CD4-positive, alpha-beta memory T cell (primary cell): ENCODE measurements at regions of chr2 and their contacts with region 1.

Region 1: DNA sequence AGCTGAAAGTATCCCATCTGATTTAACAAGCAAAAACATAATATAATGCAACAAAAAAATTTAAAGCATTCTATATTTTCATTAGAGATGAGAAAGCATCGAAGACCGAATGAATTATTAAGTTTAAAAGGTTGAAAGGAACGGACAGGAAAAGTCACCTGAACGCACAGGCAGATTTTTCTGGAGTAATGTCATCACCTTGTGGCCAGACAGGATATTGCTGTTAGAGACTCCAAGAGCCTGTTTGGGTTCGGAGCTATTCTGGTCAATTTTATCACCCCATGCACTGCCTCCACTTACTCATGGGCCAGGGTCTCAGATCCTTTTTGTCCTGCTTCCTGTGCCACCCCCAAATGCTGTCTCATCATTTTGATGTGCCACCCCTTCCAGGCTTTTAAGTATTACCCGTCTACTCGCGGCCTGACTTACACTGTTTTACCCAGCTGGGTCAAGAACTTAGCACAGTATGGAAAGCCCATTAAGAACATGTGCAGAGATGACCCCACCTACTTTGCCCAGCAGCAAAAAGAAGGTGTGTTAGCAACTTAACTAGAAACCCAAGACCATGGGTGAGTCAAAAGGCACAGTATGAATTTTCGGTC is 27.3 kb downstream of the GKN2 start:
- DNase-seq: peak; percentile 57 to 73 (median 66)
- H3K4me3 ChIP-seq: no peak overlapping the region
- H3K4me3 Mint-ChIP-seq: peak overlapping the region in 1 of 8 donors; percentile 17
- H3K27ac ChIP-seq: no peak overlapping the region
- H3K27ac Mint-ChIP-seq: peak overlapping the region in 3 of 7 donors; percentile 17 to 43 (median 24)
- H3K4me1 ChIP-seq: peaks cover 4% of the 10 kb centered on the region
- H3K4me1 Mint-ChIP-seq: peaks cover 0 to 4% (median 2%) of the 10 kb centered on the region in 4 donors
- H3K27me3 ChIP-seq: no peaks in the 10 kb centered on the region
- H3K27me3 Mint-ChIP-seq: peaks cover 5 to 6% of the 10 kb centered on the region in 2 donors

Region 2: GRCh38 chr2:68362069-68362468 is 563.3 kb before region 1 on chr2:
- CTCF ChIA-PET with region 1: no interaction called
- POLR2A ChIA-PET with region 1: no interaction called
- intact Hi-C with region 1: loop called (anchors 5 kb)
- DNase-seq: peak; percentile 74 to 82 (median 77)
- H3K4me3 ChIP-seq: peak overlapping the region in 1 of 2 donors; percentile 11
- H3K4me3 Mint-ChIP-seq: peak overlapping the region; percentile 63 to 88 (median 79)
- H3K27ac ChIP-seq: no peak overlapping the region
- H3K27ac Mint-ChIP-seq: peak overlapping the region; percentile 38 to 88 (median 83)
- H3K4me1 ChIP-seq: peaks cover 11% of the 10 kb centered on the region
- H3K4me1 Mint-ChIP-seq: peaks cover 5 to 42% (median 19%) of the 10 kb centered on the region in 4 donors
- H3K27me3 ChIP-seq: no peaks in the 10 kb centered on the region
- H3K27me3 Mint-ChIP-seq: no peaks in the 10 kb centered on the region

Region 3: GRCh38 chr2:68594674-68595492 is 330.5 kb before region 1 on chr2:
- CTCF ChIA-PET with region 1: interaction called, 19 read pairs
- POLR2A ChIA-PET with region 1: no interaction called
- intact Hi-C with region 1: loop called (anchors 10 kb)
- DNase-seq: peak; percentile 46 to 56 (median 51)
- H3K4me3 ChIP-seq: no peak overlapping the region
- H3K4me3 Mint-ChIP-seq: peak overlapping the region in 7 of 8 donors; percentile 1 to 70 (median 35)
- H3K27ac ChIP-seq: no peak overlapping the region
- H3K27ac Mint-ChIP-seq: peak overlapping the region in 3 of 7 donors; percentile 10 to 49 (median 23)
- H3K4me1 ChIP-seq: peaks cover 7% of the 10 kb centered on the region
- H3K4me1 Mint-ChIP-seq: peaks cover 2 to 12% (median 7%) of the 10 kb centered on the region in 4 donors
- H3K27me3 ChIP-seq: no peaks in the 10 kb centered on the region
- H3K27me3 Mint-ChIP-seq: peaks cover 5 to 10% of the 10 kb centered on the region in 2 donors

Region 4: DNA sequence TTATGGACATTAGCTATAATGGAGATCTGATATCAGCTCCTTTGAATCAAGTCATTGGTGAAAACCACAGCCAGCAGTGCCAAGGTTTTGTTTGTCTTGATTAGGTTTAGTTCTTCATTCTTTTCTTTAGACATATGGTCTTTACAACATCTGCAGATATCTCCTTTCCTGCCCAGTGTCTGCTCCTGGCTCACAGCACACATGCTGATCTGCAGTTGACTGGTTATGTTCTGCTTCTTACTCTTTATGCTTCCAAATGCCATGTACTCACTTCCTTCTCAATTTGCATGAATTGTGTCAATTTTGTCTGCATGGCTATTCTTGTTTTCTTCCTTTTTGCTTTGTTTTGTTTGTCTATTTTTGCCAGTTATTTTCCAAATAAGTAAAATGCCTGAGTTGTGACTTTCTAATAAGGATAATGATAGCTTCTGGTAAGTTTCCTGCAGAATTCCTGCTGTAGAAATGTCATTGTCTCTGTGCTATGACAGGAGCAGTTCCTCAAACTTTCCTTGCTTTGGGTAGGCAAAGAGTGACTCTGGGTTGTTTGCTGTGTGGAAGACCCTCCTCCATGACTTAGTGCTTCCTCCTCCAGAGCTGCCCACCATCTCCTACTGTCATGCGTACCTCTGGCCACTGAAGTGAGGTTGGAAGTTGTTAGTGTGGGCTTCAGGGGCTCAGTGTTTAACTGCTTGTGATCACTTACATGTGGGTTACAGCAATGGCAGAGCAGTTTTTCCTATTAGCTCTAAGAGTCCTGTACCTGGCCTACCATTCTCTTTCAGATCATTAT is 182.6 kb before region 1 on chr2:
- CTCF ChIA-PET with region 1: interaction called, 12 read pairs
- POLR2A ChIA-PET with region 1: interaction called, 3 read pairs
- intact Hi-C with region 1: no loop called
- DNase-seq: no peak
- H3K4me3 ChIP-seq: peak overlapping the region in 1 of 2 donors; percentile 29
- H3K4me3 Mint-ChIP-seq: peak overlapping the region; percentile 61 to 88 (median 79)
- H3K27ac ChIP-seq: no peak overlapping the region
- H3K27ac Mint-ChIP-seq: peak overlapping the region in 6 of 7 donors; percentile 78 to 93 (median 81)
- H3K4me1 ChIP-seq: peaks cover 99% of the 10 kb centered on the region
- H3K4me1 Mint-ChIP-seq: peaks cover 78 to 97% (median 89%) of the 10 kb centered on the region in 4 donors
- H3K27me3 ChIP-seq: no peaks in the 10 kb centered on the region
- H3K27me3 Mint-ChIP-seq: no peaks in the 10 kb centered on the region

Region 5: GRCh38 chr2:68943581-68944568 is 18.5 kb after region 1 on chr2:
- CTCF ChIA-PET with region 1: interaction called, 32 read pairs
- POLR2A ChIA-PET with region 1: no interaction called
- intact Hi-C with region 1: no loop called
- DNase-seq: peak; percentile 43 to 67 (median 58)
- H3K4me3 ChIP-seq: no peak overlapping the region
- H3K4me3 Mint-ChIP-seq: peak overlapping the region in 1 of 8 donors; percentile 12
- H3K27ac ChIP-seq: no peak overlapping the region
- H3K27ac Mint-ChIP-seq: no peak overlapping the region
- H3K4me1 ChIP-seq: no peaks in the 10 kb centered on the region
- H3K4me1 Mint-ChIP-seq: peaks cover 2 to 5% (median 5%) of the 10 kb centered on the region in 4 donors
- H3K27me3 ChIP-seq: peaks cover 15% of the 10 kb centered on the region
- H3K27me3 Mint-ChIP-seq: peaks cover 27 to 28% of the 10 kb centered on the region in 2 donors